B cell (primary cell): ENCODE measurements at regions of chr4 and their contacts with region 1.

Region 1: DNA sequence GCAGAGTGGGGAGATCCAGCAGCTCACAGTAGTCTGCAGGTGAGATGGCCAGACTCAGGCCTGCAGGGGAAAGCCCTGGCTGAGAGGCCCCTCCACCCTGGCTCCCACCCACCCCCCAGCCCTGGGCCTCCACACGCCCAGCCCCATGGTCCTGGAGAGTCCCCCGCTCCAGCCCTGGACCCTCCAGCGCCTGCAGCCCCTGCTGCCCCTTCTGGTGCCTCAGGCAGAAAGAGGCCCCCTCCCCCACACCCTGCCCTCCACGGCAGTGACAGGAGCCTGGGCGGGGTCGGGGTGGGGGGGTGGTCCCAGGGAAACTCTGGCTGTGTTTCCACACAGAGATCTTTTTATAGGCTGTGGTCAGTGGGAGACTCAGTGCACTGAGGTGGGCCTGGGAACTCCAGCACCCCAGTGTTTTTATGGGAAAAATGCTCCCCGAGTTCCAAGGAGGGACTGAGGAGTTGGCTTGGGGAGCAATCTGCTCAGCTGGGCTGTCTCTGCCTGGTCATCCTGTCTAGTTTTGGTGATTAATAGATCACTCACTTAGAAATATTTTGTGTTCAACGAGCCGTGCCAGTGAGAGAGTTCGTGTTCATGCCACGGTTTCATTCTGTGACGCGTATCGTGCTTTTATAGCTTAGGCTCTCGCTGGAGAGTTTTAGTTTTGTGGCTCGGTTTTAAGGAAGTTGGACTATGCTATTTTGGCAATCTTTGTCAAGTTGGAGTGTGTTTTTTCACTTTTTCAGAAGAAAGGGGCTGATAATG is 53.1 kb upstream of the HGFAC start:
- DNase-seq: peak; percentile 75
- ATAC-seq: peak; percentile 67
- H3K4me3 ChIP-seq: peak overlapping the region in 4 of 5 experiments; percentile 13 to 58 (median 34)
- H3K4me3 Mint-ChIP-seq: peak overlapping the region; percentile 94
- H3K27ac ChIP-seq: peak overlapping the region; percentile 17 to 45
- H3K27ac Mint-ChIP-seq: peak overlapping the region; percentile 88
- H3K4me1 ChIP-seq: peaks cover 37 to 52% of the 10 kb centered on the region in 2 donors
- H3K4me1 Mint-ChIP-seq: peaks cover 48% of the 10 kb centered on the region
- H3K27me3 ChIP-seq: peaks cover 0 to 17% (median 3%) of the 10 kb centered on the region in 4 experiments
- H3K27me3 Mint-ChIP-seq: peaks cover 5% of the 10 kb centered on the region
- CTCF ChIP-seq: no peak

Region 2: DNA sequence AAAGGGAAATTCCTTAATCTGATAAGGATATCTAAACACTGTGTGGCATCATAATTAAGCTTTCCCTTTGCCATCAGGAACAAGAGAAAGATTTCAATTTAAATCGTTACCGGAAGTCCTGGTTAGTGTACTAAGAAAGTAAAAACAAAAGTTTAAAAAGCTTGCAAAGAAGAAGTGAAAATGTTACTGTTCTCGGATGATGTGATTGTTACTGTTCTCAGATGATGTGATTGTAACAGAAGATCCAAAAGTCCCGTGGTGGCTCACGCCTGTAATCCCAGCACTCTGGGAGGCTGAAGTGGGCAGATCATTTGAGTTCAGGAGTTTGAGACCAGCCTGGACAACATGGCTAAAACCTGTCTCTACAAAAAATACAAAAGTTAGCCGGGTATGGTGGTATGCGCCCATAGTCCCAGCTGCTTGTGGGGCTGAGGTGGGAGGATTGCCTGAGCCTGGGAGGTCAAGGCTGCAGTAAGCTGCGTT is 33.3 kb before region 1 on chr4:
- CTCF ChIA-PET with region 1: interaction called, 3 read pairs
- POLR2A ChIA-PET with region 1: interaction called, 11 read pairs
- intact Hi-C with region 1: no loop called
- DNase-seq: peak; percentile 63
- ATAC-seq: peak; percentile 66
- H3K4me3 ChIP-seq: peak overlapping the region in 2 of 5 experiments; percentile 25 to 47
- H3K4me3 Mint-ChIP-seq: peak overlapping the region; percentile 75
- H3K27ac ChIP-seq: peak overlapping the region; percentile 72 to 79
- H3K27ac Mint-ChIP-seq: peak overlapping the region; percentile 94
- H3K4me1 ChIP-seq: peaks cover 0 to 8% of the 10 kb centered on the region in 2 donors
- H3K4me1 Mint-ChIP-seq: peaks cover 35% of the 10 kb centered on the region
- H3K27me3 ChIP-seq: no peaks in the 10 kb centered on the region
- H3K27me3 Mint-ChIP-seq: no peaks in the 10 kb centered on the region
- CTCF ChIP-seq: no peak